Prostate gland (tissue), 2 donors: ENCODE measurements at regions of chr3 and their contacts with region 1.

Region 1: DNA sequence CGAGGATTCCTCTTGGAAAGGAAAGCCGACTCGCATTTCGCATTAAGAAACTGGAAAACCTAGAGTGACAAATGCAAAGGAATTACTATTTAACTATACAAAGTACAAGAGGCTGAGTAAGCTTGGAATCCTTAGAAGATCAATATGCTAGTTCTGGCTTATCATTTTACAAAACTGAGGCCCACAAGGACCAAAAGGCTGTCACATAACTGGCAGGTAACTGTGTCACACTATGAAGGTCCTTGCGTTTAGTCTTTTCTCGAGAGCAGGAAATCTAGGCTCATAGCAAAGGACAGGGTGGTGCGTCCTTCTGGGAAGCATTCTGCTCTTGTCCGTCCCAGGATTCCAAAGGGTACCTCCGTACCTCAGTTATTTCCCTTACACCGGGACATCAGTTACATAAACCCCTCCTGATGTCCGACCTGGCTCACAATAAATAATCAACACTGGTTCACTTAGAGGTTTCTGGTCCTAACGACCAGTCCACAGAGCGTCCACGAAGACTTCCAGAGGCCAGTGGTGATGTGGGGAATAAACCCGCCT is 577 bp downstream of the RPL24 start:
- DNase-seq: no peak
- H3K4me3 ChIP-seq: peak overlapping the region; percentile 56 to 67
- H3K27ac ChIP-seq: peak overlapping the region; percentile 89 to 92
- H3K4me1 ChIP-seq: peaks cover 4% of the 10 kb centered on the region
- H3K27me3 ChIP-seq: no peaks in the 10 kb centered on the region
- CTCF ChIP-seq: no peak
- POLR2A ChIP-seq: no peak

Region 2: DNA sequence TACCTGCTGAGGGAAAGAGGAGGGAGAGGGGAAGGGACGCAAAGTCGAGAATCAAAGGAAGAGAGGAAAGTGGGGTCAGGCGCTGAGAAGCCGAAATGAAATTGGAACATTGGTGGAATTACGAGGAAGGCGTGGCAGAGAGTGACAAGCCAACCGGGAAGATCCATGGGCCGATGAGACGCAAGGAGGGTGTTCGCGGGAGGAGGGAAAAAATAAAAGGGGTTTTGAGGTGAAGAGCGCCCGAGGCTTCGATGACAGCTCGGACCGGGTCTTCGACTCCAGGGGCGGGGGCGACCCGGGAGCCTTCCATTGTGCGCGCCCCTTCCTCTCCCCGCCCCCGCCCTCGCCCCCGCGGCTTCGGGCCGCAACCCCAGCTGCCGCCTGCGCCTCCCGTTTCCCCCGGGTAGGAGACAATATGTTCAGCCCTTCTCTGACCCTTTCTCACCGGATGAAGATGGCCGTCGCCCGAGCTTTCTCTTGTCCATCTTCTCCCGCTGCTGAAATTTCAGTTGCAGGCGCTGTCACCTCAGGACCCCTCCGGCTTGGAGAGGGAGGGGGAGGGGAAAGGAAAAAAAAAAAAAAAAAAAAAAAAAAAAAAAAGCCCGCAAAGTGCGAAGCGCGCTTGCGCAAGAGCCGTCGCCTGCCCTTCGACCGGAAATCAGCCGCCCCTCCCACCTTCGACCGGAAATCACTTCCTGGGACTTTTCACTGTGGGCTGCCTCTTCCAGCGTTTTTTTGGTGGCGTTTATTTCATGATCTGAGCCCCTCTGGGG is 173.1 kb before region 1 on chr3 and contains the start of gene SENP7:
- intact Hi-C with region 1: loop called (anchors 10 kb)
- DNase-seq: peak; percentile 78
- H3K4me3 ChIP-seq: peak within 1 kb of the TSS; percentile 63 to 68
- H3K27ac ChIP-seq: peak within 1 kb of the TSS; percentile 93 to 96
- H3K4me1 ChIP-seq: no peaks in the 10 kb centered on the region
- H3K27me3 ChIP-seq: no peaks in the 10 kb centered on the region
- CTCF ChIP-seq: no peak
- POLR2A ChIP-seq: no peak
- total RNA-seq, gene SENP7: 16.4 to 22.7 TPM

Region 3: DNA sequence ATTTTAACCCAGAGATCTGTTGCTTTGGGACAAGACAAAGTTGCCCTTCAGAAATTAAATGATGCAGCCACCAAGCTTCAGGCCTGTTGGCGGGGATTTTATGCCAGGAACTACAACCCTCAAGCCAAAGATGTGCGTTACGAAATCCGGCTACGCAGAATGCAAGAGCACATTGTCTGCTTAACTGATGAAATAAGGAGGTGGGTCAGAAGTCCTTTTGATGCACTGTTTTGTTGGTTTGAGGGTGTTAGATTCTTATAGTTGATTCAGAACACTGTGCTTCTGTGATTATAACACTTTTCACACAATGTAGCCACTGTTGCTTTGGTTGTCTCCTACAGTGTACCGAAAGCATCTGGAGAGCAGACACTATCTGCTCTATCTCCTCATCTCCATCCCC is 72.3 kb after region 1 on chr3:
- intact Hi-C with region 1: no loop called
- DNase-seq: no peak
- H3K4me3 ChIP-seq: no peak overlapping the region
- H3K27ac ChIP-seq: no peak overlapping the region
- H3K4me1 ChIP-seq: no peaks in the 10 kb centered on the region
- H3K27me3 ChIP-seq: no peaks in the 10 kb centered on the region
- CTCF ChIP-seq: no peak
- POLR2A ChIP-seq: no peak